ENCODE measurements at regions of chr17 and their contacts with region 1.

Region 1: DNA sequence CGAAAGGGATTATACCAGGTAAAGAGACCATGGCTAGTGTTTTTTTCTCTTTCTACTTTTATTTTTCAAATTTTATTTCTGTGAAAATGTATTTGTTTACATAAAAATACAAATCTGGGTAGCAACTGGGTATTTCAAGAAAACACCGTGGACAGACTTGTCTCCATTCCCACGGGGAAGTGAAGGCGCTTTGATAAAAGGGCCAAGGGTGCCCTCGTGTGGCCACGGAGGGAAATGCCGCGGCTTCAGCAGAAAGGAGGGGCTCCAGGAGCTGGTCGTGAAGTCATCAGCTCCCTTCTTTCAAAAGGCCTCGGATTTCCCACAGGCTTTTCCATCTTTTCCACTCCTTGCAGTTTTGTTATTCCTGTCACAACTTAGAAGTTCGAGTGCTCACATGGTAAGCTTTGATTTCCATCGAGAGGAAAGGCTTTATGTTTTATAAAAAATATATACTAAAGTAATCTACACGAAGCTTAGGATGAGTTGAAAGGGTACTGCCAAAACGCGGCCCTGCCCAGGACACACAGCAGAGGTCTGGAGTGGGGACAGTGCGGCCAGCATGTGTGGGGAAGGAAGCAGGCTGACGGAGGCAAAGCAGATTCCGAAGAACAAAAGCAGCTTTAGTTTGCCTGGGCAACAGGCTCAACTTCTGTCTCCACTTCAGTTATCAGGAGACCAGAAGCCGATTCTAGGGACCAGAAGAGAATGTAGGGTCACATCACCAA is 15.3 kb upstream of the MNT start:
- DNase-seq: peak; percentile 51 to 91 (median 78)
- ATAC-seq: peak; percentile 76 to 89 (median 84)
- H3K4me3 ChIP-seq: no peak overlapping the region
- H3K4me3 Mint-ChIP-seq: no peak overlapping the region
- H3K27ac ChIP-seq: no peak overlapping the region
- H3K27ac Mint-ChIP-seq: peak overlapping the region in 1 of 2 donors; percentile 73
- H3K4me1 ChIP-seq: peaks cover 0 to 3% of the 10 kb centered on the region in 2 experiments
- H3K4me1 Mint-ChIP-seq: peaks cover 0 to 3% (median 2%) of the 10 kb centered on the region in 3 donors
- H3K27me3 ChIP-seq: no peaks in the 10 kb centered on the region
- H3K27me3 Mint-ChIP-seq: no peaks in the 10 kb centered on the region

Region 2: GRCh38 chr17:2380226-2380922 is 35.8 kb before region 1 on chr17:
- CTCF ChIA-PET with region 1: interaction called, 49 to 231 read pairs
- POLR2A ChIA-PET with region 1: interaction called, 4 to 21 read pairs
- DNase-seq: no peak
- ATAC-seq: no peak
- H3K4me3 ChIP-seq: no peak overlapping the region
- H3K4me3 Mint-ChIP-seq: no peak overlapping the region
- H3K27ac ChIP-seq: no peak overlapping the region
- H3K27ac Mint-ChIP-seq: no peak overlapping the region
- H3K4me1 ChIP-seq: peaks cover 0 to 12% of the 10 kb centered on the region in 2 experiments
- H3K4me1 Mint-ChIP-seq: peaks cover 0 to 9% (median 7%) of the 10 kb centered on the region in 3 donors
- H3K27me3 ChIP-seq: no peaks in the 10 kb centered on the region
- H3K27me3 Mint-ChIP-seq: no peaks in the 10 kb centered on the region

Region 3: GRCh38 chr17:2386400-2387085 is 29.6 kb before region 1 on chr17:
- CTCF ChIA-PET with region 1: interaction called, 49 to 231 read pairs
- POLR2A ChIA-PET with region 1: interaction called, 4 to 21 read pairs
- DNase-seq: no peak
- ATAC-seq: no peak
- H3K4me3 ChIP-seq: no peak overlapping the region
- H3K4me3 Mint-ChIP-seq: no peak overlapping the region
- H3K27ac ChIP-seq: no peak overlapping the region
- H3K27ac Mint-ChIP-seq: peak overlapping the region in 1 of 2 donors; percentile 11
- H3K4me1 ChIP-seq: peaks cover 4 to 38% of the 10 kb centered on the region in 2 experiments
- H3K4me1 Mint-ChIP-seq: peaks cover 26 to 36% (median 33%) of the 10 kb centered on the region in 3 donors
- H3K27me3 ChIP-seq: no peaks in the 10 kb centered on the region
- H3K27me3 Mint-ChIP-seq: no peaks in the 10 kb centered on the region

Region 4: GRCh38 chr17:2392252-2393173 is 23.7 kb before region 1 on chr17:
- CTCF ChIA-PET with region 1: interaction called, 3 to 14 read pairs
- POLR2A ChIA-PET with region 1: interaction called in 1 of 2 experiments, 8 read pairs
- DNase-seq: peak; percentile 88 to 99 (median 95)
- ATAC-seq: peak; percentile 68 to 73 (median 72)
- H3K4me3 ChIP-seq: peak overlapping the region; percentile 60 to 97
- H3K4me3 Mint-ChIP-seq: peak overlapping the region; percentile 88 to 96 (median 88)
- H3K27ac ChIP-seq: peak overlapping the region; percentile 99
- H3K27ac Mint-ChIP-seq: peak overlapping the region; percentile 95 to 96
- H3K4me1 ChIP-seq: peaks cover 20 to 74% of the 10 kb centered on the region in 2 experiments
- H3K4me1 Mint-ChIP-seq: peaks cover 60 to 67% (median 60%) of the 10 kb centered on the region in 3 donors
- H3K27me3 ChIP-seq: no peaks in the 10 kb centered on the region
- H3K27me3 Mint-ChIP-seq: no peaks in the 10 kb centered on the region

Region 5: GRCh38 chr17:2449486-2449885 is 33.3 kb after region 1 on chr17:
- CTCF ChIA-PET with region 1: no interaction called
- POLR2A ChIA-PET with region 1: no interaction called
- DNase-seq: no peak
- ATAC-seq: no peak
- H3K4me3 ChIP-seq: no peak overlapping the region
- H3K4me3 Mint-ChIP-seq: no peak overlapping the region
- H3K27ac ChIP-seq: no peak overlapping the region
- H3K27ac Mint-ChIP-seq: peak overlapping the region in 1 of 2 donors; percentile 24
- H3K4me1 ChIP-seq: no peaks in the 10 kb centered on the region
- H3K4me1 Mint-ChIP-seq: peaks cover 4 to 13% (median 12%) of the 10 kb centered on the region in 3 donors
- H3K27me3 ChIP-seq: no peaks in the 10 kb centered on the region
- H3K27me3 Mint-ChIP-seq: no peaks in the 10 kb centered on the region

Measured in T-cell (primary cell).